MCF 10A (cell line): ENCODE measurements at regions of chr2 and their contacts with region 1.

Region 1: GRCh38 chr2:54704688-54705605 is 18.5 kb upstream of the EML6 start:
- DNase-seq: peak; percentile 77
- H3K4me3 Mint-ChIP-seq: no peak overlapping the region
- H3K27ac Mint-ChIP-seq: no peak overlapping the region
- H3K4me1 Mint-ChIP-seq: no peaks in the 10 kb centered on the region
- H3K27me3 Mint-ChIP-seq: no peaks in the 10 kb centered on the region
- CTCF ChIP-seq: peak; percentile 58

Region 2: GRCh38 chr2:54106631-54107454 is 598.1 kb before region 1 on chr2:
- CTCF ChIA-PET with region 1: interaction called, 40 read pairs
- POLR2A ChIA-PET with region 1: interaction called, 8 read pairs
- intact Hi-C with region 1: loop called (anchors 1 kb)
- DNase-seq: peak; percentile 68
- H3K4me3 Mint-ChIP-seq: no peak overlapping the region
- H3K27ac Mint-ChIP-seq: no peak overlapping the region
- H3K4me1 Mint-ChIP-seq: peaks cover 6% of the 10 kb centered on the region
- H3K27me3 Mint-ChIP-seq: no peaks in the 10 kb centered on the region
- CTCF ChIP-seq: peak; percentile 64

Region 3: DNA sequence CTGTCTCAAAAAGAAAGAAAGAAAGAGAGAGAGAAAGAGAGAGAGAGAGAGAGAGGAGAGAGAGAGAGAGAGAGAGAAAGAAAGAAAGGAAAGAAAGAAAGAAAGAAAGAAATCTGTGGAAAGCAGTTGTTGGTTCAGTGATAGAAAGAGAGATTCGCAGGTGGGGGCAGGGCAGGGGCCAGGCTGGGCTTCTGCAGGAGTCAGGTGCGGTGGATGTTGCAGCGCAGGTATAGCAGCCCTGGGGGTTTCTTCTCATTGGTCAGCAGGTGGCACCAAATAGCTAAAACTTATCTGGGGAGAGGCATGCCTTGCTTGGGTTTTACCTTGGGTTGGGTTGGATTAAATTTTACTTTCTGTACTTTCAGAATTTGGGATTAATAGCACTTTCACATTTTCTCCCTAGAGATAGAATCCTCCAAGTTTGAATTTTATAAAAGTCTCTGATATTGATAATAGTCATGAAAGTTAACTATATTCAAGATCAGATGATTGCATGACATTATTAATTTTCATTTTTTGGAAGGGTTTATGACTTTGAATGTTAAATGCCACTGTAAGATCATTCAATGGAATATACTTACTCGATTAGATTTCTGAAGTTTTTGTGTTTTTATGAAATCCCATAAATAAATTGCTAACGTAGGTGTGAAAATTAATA is 182.2 kb before region 1 on chr2:
- CTCF ChIA-PET with region 1: interaction called, 103 read pairs
- POLR2A ChIA-PET with region 1: interaction called, 6 read pairs
- intact Hi-C with region 1: loop called (anchors 1 kb)
- DNase-seq: peak; percentile 92
- H3K4me3 Mint-ChIP-seq: no peak overlapping the region
- H3K27ac Mint-ChIP-seq: no peak overlapping the region
- H3K4me1 Mint-ChIP-seq: peaks cover 27% of the 10 kb centered on the region
- H3K27me3 Mint-ChIP-seq: no peaks in the 10 kb centered on the region
- CTCF ChIP-seq: peak; percentile 67

Region 4: DNA sequence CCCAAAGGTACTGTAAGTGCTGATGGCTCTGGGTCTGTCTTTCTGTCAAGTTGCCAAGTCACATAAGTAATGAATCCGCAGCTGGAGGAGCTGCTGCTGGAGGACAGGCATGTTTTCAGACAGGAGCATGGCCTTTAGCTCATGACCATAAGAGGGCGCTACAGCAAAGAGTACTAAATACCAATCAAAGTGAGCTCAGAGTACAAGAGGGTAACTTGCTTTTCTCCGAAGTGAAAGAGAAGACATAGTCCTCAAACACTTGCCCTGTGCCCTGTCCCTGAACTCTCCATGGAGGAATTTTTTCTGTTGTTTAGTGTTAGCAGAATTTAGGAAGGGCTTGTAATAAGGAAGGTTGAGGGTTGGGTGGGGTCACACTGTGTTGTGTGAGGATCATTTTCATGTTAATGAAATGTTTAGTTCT is 39.5 kb before region 1 on chr2:
- CTCF ChIA-PET with region 1: interaction called, 34 read pairs
- POLR2A ChIA-PET with region 1: no interaction called
- intact Hi-C with region 1: loop called (anchors 2 kb)
- DNase-seq: peak; percentile 69
- H3K4me3 Mint-ChIP-seq: peak overlapping the region; percentile 30
- H3K27ac Mint-ChIP-seq: peak overlapping the region; percentile 41
- H3K4me1 Mint-ChIP-seq: peaks cover 29% of the 10 kb centered on the region
- H3K27me3 Mint-ChIP-seq: no peaks in the 10 kb centered on the region
- CTCF ChIP-seq: peak; percentile 43

Region 5: DNA sequence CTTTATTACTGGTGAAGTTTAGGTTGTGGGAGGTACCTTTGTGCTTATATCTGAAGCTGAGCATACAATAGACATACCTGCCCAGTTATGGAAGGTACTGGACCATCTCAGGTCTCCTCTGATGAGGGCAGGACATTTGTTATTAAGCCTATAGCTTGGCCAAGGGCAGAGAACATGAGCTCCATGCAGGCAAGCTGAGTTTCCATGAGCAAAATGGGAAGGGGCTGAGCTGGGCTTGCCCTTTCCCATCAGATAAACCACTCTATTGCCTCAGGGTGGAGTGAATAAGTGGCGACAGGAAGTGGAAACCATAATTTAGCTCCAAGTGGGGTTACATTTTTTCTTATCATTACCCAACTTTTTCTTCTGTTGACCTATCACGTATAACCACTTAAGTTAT is 21.4 kb before region 1 on chr2:
- CTCF ChIA-PET with region 1: interaction called, 12 read pairs
- POLR2A ChIA-PET with region 1: interaction called, 4 read pairs
- intact Hi-C with region 1: no loop called
- DNase-seq: no peak
- H3K4me3 Mint-ChIP-seq: no peak overlapping the region
- H3K27ac Mint-ChIP-seq: no peak overlapping the region
- H3K4me1 Mint-ChIP-seq: peaks cover 5% of the 10 kb centered on the region
- H3K27me3 Mint-ChIP-seq: no peaks in the 10 kb centered on the region
- CTCF ChIP-seq: no peak

Region 6: GRCh38 chr2:54757500-54757899 is 52.6 kb after region 1 on chr2:
- CTCF ChIA-PET with region 1: no interaction called
- POLR2A ChIA-PET with region 1: no interaction called
- intact Hi-C with region 1: no loop called
- DNase-seq: no peak
- H3K4me3 Mint-ChIP-seq: no peak overlapping the region
- H3K27ac Mint-ChIP-seq: no peak overlapping the region
- H3K4me1 Mint-ChIP-seq: peaks cover 9% of the 10 kb centered on the region
- H3K27me3 Mint-ChIP-seq: no peaks in the 10 kb centered on the region
- CTCF ChIP-seq: no peak